Activated CD8-positive, alpha-beta T cell treated with anti-CD3 and anti-CD28 coated beads, Interleukin-2, amount 10 ng/mL, durations not matched to agents 7 days and 5 days (primary cell): ENCODE measurements at regions of chr11 and their contacts with region 1.

Region 1: DNA sequence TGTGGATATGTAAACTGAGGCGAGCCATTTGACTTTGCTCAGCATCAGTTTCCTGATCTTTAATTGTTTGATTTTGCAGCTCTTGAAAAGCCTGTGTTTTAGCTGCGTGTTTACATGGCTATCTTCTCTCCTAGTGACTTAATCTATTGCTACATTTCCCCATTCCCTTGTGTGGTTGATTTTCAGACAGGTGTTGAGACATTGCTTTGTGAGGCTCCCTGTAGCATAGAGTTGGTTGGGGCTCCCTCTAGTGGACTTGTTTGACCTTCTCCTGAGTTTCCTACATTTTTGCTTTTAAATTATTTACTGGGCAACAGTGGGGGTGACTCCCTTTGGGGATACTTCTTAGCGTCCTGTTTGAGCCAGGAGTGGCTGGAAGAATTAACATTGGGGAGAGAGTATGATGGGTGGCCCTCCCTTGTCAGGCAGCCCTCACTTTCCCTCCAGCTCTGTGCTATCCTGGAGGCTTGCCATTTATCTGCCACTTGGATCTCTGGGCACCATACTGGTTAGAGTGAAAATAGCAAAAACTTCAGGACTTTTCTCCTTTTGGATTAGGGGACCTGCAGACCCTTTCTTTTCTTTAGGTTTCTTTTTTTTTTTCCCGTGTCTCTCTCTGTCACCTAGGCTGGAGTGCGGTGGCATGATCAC is 9.2 kb upstream of the CBL start:
- DNase-seq: peak; percentile 85
- ATAC-seq: peak; percentile 96
- H3K4me3 Mint-ChIP-seq: no peak overlapping the region
- H3K27ac Mint-ChIP-seq: no peak overlapping the region
- H3K4me1 Mint-ChIP-seq: peaks cover 4% of the 10 kb centered on the region
- H3K27me3 Mint-ChIP-seq: peaks cover 3% of the 10 kb centered on the region

Region 2: GRCh38 chr11:119144825-119145486 is 52.0 kb before region 1 on chr11:
- CTCF ChIA-PET with region 1: interaction called, 11 read pairs
- POLR2A ChIA-PET with region 1: no interaction called
- DNase-seq: peak; percentile 51
- ATAC-seq: peak; percentile 32
- H3K4me3 Mint-ChIP-seq: no peak overlapping the region
- H3K27ac Mint-ChIP-seq: no peak overlapping the region
- H3K4me1 Mint-ChIP-seq: peaks cover 13% of the 10 kb centered on the region
- H3K27me3 Mint-ChIP-seq: peaks cover 41% of the 10 kb centered on the region

Region 3: GRCh38 chr11:119155733-119156492 is 41.0 kb before region 1 on chr11:
- CTCF ChIA-PET with region 1: interaction called, 17 read pairs
- POLR2A ChIA-PET with region 1: no interaction called
- DNase-seq: no peak
- ATAC-seq: peak; percentile 35
- H3K4me3 Mint-ChIP-seq: no peak overlapping the region
- H3K27ac Mint-ChIP-seq: no peak overlapping the region
- H3K4me1 Mint-ChIP-seq: peaks cover 6% of the 10 kb centered on the region
- H3K27me3 Mint-ChIP-seq: peaks cover 13% of the 10 kb centered on the region

Region 4: DNA sequence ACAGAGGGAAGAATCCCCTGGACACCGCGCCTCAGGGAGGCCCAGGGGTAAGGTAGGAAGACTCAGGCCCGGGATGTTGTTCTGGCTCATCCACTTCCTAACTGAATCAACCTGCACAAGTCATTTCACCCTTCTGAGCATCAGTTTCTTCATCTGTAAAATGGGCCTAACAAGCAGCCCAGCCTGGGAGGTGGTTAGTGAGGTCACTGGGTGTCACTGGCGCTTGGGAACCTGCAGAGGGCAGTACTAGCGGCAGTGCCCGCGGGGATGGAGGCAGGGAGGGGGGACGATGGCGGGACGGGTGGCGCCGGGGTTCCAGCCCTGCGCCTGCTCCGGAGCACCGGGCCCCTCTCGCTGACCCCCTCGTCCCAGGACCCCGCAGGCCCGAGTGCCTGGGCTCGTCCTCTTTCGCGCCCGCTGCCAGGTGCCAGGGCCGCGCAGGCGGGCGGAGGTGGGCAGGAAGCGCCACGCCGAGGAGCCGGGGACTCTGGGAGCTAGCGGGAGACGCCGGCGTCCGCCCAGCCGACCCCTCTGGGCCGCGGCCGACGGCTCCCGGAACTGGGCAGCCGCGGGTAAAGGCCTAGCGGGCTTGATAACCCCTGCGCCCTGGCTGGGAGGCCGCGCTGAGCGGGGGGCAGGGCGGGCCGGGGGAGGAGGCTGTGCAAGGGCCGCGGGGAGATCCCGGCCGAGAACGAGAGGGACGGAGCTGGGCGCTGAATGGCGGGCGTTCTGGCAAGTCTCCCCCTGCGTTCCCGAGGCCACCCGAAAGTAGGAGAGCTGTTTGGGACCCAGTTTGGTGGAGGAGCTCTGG is 28.3 kb before region 1 on chr11 and contains the start of gene NLRX1:
- CTCF ChIA-PET with region 1: interaction called, 16 read pairs
- POLR2A ChIA-PET with region 1: no interaction called
- DNase-seq: peak; percentile 92
- ATAC-seq: peak; percentile 96
- H3K4me3 Mint-ChIP-seq: peak within 1 kb of the TSS; percentile 86
- H3K27ac Mint-ChIP-seq: peak within 1 kb of the TSS; percentile 92
- H3K4me1 Mint-ChIP-seq: peaks cover 30% of the 10 kb centered on the region
- H3K27me3 Mint-ChIP-seq: no peaks in the 10 kb centered on the region
- total RNA-seq, gene NLRX1: 24.6 to 24.8 TPM

Region 5: GRCh38 chr11:119229288-119229672 is 32.3 kb after region 1 on chr11:
- CTCF ChIA-PET with region 1: no interaction called
- POLR2A ChIA-PET with region 1: no interaction called
- DNase-seq: no peak
- ATAC-seq: no peak
- H3K4me3 Mint-ChIP-seq: peak overlapping the region; percentile 49
- H3K27ac Mint-ChIP-seq: peak overlapping the region; percentile 58
- H3K4me1 Mint-ChIP-seq: peaks cover 33% of the 10 kb centered on the region
- H3K27me3 Mint-ChIP-seq: no peaks in the 10 kb centered on the region

Region 6: GRCh38 chr11:119284344-119285157 is 87.6 kb after region 1 on chr11:
- CTCF ChIA-PET with region 1: interaction called, 23 read pairs
- POLR2A ChIA-PET with region 1: no interaction called
- DNase-seq: peak; percentile 29
- ATAC-seq: peak; percentile 88
- H3K4me3 Mint-ChIP-seq: no peak overlapping the region
- H3K27ac Mint-ChIP-seq: no peak overlapping the region
- H3K4me1 Mint-ChIP-seq: peaks cover 31% of the 10 kb centered on the region
- H3K27me3 Mint-ChIP-seq: no peaks in the 10 kb centered on the region